Activated CD4-positive, alpha-beta T cell treated with anti-CD3 and anti-CD28 coated beads, Interleukin-2, amount 10 ng/mL, durations not matched to agents 24 days and 14 days (primary cell): ENCODE measurements at regions of chr6 and their contacts with region 1.

Region 1: DNA sequence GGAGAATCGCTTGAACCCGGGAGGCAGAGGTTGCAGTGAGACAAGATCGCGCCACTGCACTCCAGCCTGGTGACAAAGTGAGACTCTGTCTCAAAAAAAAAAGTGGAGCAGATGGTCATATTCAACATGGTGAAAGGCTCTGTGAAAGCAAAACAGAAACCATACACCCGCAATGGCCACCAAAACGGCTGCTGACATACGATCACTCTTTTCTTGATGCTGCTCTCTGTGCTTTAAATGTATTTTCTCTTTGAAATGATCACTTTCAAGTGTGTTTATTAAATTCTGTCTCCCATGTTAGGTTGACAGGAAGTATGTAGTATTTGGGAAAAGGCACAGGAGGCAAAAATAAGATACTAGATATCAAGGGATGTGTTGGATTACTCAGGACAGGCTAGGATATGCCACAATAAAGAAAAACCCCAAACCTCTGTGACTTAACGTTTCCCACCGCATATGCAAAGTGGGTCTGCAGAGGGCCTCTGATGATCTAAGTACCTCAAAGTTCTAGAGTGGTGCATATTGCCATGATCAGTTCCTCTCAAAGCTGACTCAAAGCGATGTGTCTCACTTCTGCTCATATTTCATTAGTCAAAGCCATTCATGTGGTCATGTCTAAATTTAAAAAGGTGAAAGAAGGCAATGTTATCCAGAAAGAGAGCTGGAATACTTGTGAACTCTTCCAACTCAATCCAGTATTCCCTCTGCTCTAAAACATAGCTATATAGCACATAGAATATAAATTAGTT is 155.1 kb upstream of the SOX4 start:
- DNase-seq: peak; percentile 79
- H3K4me3 Mint-ChIP-seq: peak overlapping the region; percentile 66
- H3K27ac Mint-ChIP-seq: peak overlapping the region; percentile 76
- H3K4me1 Mint-ChIP-seq: peaks cover 15% of the 10 kb centered on the region
- H3K27me3 Mint-ChIP-seq: peaks cover 25% of the 10 kb centered on the region

Region 2: DNA sequence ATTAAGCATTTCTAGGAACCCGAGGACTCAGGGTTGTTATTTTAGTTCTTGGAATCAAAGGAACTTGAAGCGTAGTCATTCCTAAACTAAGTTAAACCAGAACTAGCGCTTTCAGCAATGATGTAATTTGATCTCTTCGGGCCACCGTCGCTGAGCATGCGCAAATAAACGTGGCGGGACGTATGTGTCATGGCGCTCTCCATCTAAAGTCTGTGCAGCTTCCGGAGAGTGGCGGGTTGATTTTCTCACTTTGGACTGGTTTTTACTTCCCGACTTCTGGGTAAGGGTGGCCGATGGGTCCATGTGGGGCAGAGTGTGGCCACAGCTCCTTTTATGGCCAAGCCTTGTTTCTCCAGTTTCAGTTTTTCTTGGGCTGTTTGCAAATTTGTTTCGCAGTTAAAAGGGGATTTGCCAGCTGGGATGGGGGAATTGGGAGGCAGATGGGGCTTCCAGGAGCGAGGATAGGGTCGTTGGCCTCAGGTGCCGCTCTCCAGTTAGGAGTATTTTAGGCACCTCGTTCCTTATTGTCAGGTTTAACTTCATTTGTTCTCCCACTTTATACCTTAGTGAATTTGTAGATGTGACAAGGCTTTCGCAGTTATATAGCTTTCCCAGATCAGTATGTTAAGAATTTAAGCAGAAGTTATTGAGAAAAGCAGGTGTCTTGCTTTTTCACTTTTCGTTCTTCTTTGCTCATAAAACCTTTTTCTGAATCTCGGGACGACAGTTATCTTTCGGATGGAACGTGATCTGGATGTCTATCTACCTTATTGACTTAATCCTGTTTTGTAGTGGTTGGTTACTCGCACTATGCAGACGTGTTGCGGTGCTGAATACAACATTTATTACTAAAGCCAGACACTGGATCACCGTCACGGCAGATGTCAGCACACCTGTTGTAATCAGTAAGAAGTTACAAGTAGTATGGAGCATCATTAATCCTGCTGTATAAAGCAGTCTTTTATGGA is 903.8 kb before region 1 on chr6 and contains the start of gene CDKAL1:
- intact Hi-C with region 1: loop called (anchors 2 kb)
- DNase-seq: peak; percentile 97
- H3K4me3 Mint-ChIP-seq: peak within 1 kb of the TSS; percentile 96
- H3K27ac Mint-ChIP-seq: peak within 1 kb of the TSS; percentile 95
- H3K4me1 Mint-ChIP-seq: peaks cover 37% of the 10 kb centered on the region
- H3K27me3 Mint-ChIP-seq: peaks cover 2% of the 10 kb centered on the region
- total RNA-seq, gene CDKAL1: 28.5 and 29.1 TPM in 2 replicates

Region 3: GRCh38 chr6:20877008-20877937 is 561.1 kb before region 1 on chr6:
- intact Hi-C with region 1: loop called (anchors 2 kb)
- DNase-seq: peak; percentile 60
- H3K4me3 Mint-ChIP-seq: no peak overlapping the region
- H3K27ac Mint-ChIP-seq: peak overlapping the region; percentile 42
- H3K4me1 Mint-ChIP-seq: peaks cover 13% of the 10 kb centered on the region
- H3K27me3 Mint-ChIP-seq: no peaks in the 10 kb centered on the region

Region 4: DNA sequence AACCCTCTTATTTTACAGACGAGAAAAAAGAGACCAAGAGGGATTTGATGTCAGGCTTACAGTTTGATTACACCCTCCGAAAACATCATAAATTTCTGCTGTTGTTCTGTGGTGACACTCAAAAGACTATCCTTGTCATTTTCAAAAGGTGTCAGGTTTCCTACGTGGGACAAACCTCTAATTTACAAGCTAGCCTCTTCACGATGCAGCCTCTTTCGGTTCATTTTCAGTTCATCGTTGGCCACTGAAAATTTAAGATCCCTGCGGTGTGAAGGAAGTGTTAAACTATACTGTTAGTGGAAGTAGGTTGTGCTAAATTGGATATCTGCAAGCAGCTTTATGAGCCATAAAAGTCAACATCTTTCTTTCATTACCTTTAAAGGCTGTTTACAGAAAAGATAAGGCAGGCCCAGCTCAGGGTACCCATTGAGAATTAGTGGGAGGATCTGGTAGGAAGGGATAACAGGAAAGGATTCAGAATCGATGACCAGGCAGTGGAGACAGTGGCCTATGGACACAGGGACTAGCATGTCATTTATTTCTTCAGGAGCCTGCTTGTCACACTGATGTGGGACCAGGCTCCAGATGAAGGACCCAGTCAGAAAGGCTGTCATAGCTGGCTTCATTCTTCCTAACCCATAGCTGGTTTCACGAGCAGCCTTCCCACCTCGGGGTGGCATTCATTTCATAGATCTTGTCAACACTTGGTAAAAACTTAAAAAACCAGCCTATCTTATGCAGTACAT is 173.9 kb before region 1 on chr6:
- intact Hi-C with region 1: loop called (anchors 1 kb)
- DNase-seq: no peak
- H3K4me3 Mint-ChIP-seq: no peak overlapping the region
- H3K27ac Mint-ChIP-seq: no peak overlapping the region
- H3K4me1 Mint-ChIP-seq: peaks cover 10% of the 10 kb centered on the region
- H3K27me3 Mint-ChIP-seq: no peaks in the 10 kb centered on the region